ENCODE measurements at regions of chr6 and their contacts with region 1.

Region 1: DNA sequence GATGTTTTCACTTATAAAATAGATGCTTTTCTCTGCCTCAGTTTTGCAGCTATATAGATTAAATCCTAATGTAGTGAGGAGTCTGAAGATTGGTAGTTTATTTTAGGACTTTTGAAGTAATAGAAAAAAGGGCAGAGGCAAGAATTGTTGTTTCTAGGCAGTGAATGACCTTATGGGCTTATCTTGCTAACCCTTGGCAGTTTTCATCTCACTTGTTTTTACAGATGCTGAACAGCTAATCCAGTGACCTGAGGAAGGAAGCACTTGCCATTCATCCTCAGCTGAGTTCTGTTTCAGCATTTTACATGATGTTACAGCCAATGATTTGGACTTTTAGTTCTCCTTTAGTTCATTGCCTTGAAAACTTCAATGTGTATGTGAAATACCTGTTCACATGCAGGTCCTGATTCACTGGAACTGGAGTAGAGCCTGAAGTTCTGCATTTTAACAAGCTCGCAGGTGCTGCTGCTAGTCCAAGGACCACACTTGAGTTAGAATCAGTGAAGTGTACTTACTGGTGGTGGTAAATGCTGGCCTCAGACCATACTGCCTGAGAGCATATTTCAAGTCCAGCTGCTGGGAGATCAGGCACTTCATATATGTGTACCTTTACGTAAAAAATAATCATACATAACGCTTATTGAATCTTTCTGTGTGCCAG is 86.9 kb downstream of the TULP4 start:
- DNase-seq: no peak
- H3K4me3 ChIP-seq: no peak overlapping the region
- CTCF ChIP-seq: no peak

Region 2: DNA sequence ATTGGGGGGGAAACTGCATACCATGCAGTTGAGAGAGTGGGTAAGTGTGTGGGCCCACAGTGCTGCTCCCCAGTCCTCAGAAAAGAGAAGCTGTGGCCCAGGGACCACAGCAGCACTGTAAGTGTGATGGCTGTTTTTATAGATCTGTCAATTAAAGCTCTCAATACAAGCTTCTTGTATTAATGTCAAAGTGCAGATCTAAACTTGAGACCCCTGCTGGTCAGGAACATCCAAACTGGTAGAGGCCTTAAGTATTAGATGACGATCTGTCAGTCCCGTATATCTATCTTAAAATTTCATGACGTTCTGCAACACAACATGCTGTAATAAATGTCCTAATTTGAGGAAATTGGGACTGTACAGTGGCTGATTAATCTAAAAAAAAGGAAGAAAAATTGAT is 12.1 kb before region 1 on chr6:
- CTCF ChIA-PET with region 1: interaction called, 13 read pairs
- POLR2A ChIA-PET with region 1: no interaction called
- DNase-seq: no peak
- H3K4me3 ChIP-seq: no peak overlapping the region
- CTCF ChIP-seq: no peak

Region 3: GRCh38 chr6:158452182-158452581 is 53.0 kb after region 1 on chr6:
- CTCF ChIA-PET with region 1: no interaction called
- POLR2A ChIA-PET with region 1: no interaction called
- DNase-seq: no peak
- H3K4me3 ChIP-seq: no peak overlapping the region
- CTCF ChIP-seq: no peak

Region 4: GRCh38 chr6:158488065-158488464 is 88.9 kb after region 1 on chr6:
- CTCF ChIA-PET with region 1: no interaction called
- POLR2A ChIA-PET with region 1: no interaction called
- DNase-seq: peak; percentile 96
- H3K4me3 ChIP-seq: no peak overlapping the region
- CTCF ChIP-seq: no peak

Region 5: DNA sequence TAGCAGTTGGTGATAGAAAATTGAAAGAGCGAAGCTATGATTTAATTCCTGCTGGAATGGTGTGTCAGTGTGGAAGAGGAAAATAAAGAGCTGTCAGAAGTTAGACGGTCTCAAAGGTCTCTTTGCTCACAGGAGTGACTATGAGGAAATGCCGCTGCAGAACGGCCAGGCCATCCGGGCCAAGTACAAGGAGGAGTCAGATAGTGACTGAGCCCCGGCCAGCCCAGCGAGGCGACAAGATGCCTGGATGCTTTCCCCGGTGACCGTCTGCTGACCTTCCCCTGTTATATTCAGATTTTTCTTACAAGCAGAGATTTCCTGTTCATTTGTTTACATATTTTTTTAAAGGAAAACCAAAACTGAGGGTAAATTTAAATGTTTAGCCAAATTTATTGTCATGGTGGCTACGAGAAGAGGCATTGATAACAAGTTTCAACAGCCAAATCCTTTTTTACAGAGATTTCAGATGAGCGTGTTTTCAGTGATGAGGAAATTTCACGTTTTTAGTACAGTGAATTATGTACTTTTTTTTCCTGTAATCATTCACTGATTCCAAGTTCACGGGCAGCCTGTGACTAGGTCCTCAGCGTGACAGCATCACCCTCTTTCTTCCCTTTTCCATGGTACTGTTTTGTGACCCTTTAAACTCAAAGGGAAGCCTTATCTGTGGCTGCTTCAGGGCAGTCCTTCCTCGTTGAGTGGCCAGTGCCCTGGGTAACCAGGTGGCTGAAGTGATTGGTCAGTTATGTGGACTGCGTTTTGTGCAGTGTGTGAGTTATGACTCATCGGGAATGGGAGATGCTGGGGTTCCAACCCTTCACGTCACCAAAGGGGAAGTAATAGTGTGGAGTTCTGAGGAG is 232.7 kb after region 1 on chr6:
- CTCF ChIA-PET with region 1: no interaction called
- POLR2A ChIA-PET with region 1: no interaction called
- DNase-seq: no peak
- H3K4me3 ChIP-seq: no peak overlapping the region
- CTCF ChIP-seq: no peak